Activated naive CD4-positive, alpha-beta T cell treated with anti-CD3 and anti-CD28 coated beads for 36 hours (primary cell): ENCODE measurements at regions of chr9 and their contacts with region 1.

Region 1: GRCh38 chr9:125700791-125701190 is 6.2 kb downstream of the MAPKAP1 start:
- DNase-seq: peak; percentile 80
- H3K4me3 Mint-ChIP-seq: no peak overlapping the region
- H3K27ac Mint-ChIP-seq: peak overlapping the region; percentile 47
- H3K4me1 Mint-ChIP-seq: peaks cover 58% of the 10 kb centered on the region
- H3K27me3 Mint-ChIP-seq: no peaks in the 10 kb centered on the region

Region 2: DNA sequence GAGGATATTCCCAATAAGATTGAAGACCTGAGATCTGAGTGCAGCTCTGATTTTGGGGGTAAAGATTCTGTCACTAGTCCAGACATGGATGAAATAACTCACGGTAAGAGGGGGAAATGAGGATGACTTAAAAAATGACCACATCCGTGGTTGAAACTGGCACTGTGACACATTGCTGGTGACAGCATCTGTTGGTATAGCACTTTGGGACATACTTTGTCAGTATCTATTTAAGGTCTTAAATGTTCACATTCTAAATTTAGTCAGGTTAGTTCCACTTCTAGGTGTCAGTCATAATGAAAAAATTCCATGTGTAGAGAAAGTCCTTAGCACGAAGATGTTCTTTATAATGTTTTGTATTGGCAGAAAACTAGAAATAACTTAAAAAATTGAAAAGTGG is 368.3 kb before region 1 on chr9:
- CTCF ChIA-PET with region 1: no interaction called
- intact Hi-C with region 1: no loop called
- DNase-seq: peak; percentile 71
- H3K4me3 Mint-ChIP-seq: no peak overlapping the region
- H3K27ac Mint-ChIP-seq: peak overlapping the region; percentile 55
- H3K4me1 Mint-ChIP-seq: peaks cover 12% of the 10 kb centered on the region
- H3K27me3 Mint-ChIP-seq: no peaks in the 10 kb centered on the region

Region 3: GRCh38 chr9:125659954-125660353 is 40.8 kb before region 1 on chr9:
- CTCF ChIA-PET with region 1: no interaction called
- intact Hi-C with region 1: loop called (anchors 1 kb)
- DNase-seq: peak; percentile 49
- H3K4me3 Mint-ChIP-seq: no peak overlapping the region
- H3K27ac Mint-ChIP-seq: no peak overlapping the region
- H3K4me1 Mint-ChIP-seq: peaks cover 15% of the 10 kb centered on the region
- H3K27me3 Mint-ChIP-seq: no peaks in the 10 kb centered on the region

Region 4: DNA sequence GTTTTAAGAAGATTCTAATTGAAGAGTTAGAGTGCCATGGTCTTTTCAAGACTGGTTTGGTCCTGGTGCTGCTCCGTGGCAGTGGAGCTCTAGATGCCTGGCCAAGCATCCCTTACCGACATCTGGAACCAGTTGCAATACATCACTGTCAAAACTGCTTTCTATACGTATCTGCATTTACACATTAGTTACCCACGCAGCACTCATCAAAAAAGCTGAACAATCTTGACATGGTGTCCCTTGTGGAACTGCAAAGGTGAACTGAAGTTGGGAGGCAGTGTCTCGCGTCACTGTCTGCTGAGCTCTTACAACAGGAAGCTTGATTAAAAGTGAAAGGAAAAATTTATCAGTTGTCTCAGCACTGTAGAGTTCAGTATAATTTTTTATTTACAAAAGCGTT is 129.0 kb after region 1 on chr9:
- CTCF ChIA-PET with region 1: no interaction called
- intact Hi-C with region 1: loop called (anchors 2 kb)
- DNase-seq: peak; percentile 73
- H3K4me3 Mint-ChIP-seq: peak overlapping the region; percentile 77
- H3K27ac Mint-ChIP-seq: peak overlapping the region; percentile 84
- H3K4me1 Mint-ChIP-seq: peaks cover 29% of the 10 kb centered on the region
- H3K27me3 Mint-ChIP-seq: no peaks in the 10 kb centered on the region